Activated CD8-positive, alpha-beta T cell treated with anti-CD3 and anti-CD28 coated beads, Interleukin-2, amount 10 ng/mL, durations not matched to agents 7 days and 5 days (primary cell): ENCODE measurements at regions of chr5 and their contacts with region 1.

Region 1: DNA sequence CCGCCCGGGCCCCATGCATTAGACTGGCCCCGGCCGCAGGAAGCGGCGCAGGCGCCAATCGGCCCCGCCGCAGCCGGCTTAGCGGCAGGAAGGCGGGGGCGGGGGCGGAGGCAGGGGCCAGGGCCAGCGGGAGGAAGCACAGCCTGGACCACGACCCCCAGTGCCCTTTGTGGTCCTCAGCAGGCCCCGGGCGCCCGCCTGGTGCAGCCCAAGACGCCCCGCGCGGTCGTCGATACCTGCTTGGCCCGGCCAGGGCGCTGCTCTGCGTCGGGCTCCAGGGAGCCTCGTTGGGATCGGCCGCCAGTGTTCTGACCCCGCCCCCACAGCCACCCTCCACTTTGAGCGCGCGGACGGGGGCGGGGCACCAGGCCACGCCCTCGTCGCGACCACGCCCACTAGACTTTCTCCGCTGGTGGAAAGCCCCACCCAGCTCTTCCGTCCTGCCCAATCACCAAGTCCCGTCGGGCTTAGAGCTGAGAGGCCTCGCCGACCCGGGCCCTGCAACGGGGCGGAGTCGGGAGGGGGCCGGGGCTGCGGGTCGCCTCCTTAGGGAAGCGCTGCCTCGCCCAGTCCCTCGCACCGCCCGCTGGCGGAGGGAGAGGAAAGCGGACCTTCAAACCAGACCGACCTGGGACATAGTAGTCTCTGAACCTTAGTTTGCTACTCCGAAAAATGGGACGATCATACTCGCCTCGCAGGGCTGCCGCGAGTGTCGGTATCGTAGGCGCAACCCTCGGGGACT is at the start of gene PDLIM7:
- DNase-seq: peak; percentile 97
- ATAC-seq: peak; percentile 91
- H3K4me3 Mint-ChIP-seq: peak within 1 kb of the TSS; percentile 82
- H3K27ac Mint-ChIP-seq: peak within 1 kb of the TSS; percentile 67
- H3K4me1 Mint-ChIP-seq: peaks cover 61% of the 10 kb centered on the region
- H3K27me3 Mint-ChIP-seq: peaks cover 18% of the 10 kb centered on the region
- total RNA-seq, gene PDLIM7: 62.5 to 67.3 TPM

Region 2: DNA sequence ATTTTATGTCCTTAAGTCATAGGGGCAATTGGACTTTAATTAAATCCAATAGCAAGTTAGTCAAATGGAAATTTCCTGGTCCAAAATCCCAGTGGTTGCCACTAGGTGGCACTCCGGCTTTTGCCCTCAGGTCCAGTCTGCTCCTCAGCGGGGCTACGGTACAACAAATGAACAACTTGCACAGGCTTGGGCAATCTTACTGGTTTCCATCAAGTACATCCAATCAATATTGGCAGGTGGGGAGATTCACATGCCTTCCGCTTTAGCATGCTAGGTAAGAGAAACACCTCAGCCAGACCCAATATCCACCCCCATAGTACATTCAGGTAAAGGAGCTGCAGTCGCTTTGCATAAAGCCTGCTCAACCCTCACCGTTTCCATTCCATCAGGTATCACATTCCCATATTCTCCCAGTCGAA is 179.5 kb before region 1 on chr5:
- CTCF ChIA-PET with region 1: interaction called, 20 read pairs
- POLR2A ChIA-PET with region 1: no interaction called
- DNase-seq: peak; percentile 84
- ATAC-seq: peak; percentile 67
- H3K4me3 Mint-ChIP-seq: no peak overlapping the region
- H3K27ac Mint-ChIP-seq: no peak overlapping the region
- H3K4me1 Mint-ChIP-seq: peaks cover 44% of the 10 kb centered on the region
- H3K27me3 Mint-ChIP-seq: no peaks in the 10 kb centered on the region

Region 3: DNA sequence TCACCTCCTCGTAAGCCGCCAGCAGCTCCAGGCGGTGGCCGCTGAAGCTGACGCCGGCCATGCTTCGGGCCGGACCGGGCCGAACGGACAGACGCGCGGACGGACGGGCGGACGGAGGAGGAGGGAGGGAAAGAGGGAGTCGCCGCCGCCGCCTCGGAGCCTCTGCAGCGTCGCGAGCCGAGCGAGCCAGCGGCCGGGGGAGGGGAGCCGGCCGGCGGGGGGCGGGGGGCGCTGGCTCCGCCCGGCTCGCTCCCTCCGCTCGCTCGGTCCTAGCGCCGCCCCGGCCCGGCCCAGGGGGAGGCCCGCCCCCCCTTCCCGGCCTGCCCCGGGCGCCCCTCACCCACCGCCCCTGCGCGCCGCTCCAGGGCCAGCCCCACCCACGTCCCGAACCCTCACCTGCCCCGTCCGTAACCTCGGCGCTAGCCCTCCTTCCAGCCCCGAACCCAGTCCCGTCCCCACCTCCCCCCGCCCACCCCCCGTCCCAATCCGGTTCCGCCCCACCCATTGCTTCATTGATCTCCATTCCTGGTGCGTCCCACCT is 23.9 kb before region 1 on chr5 and contains the start of gene DBN1:
- CTCF ChIA-PET with region 1: interaction called, 28 read pairs
- POLR2A ChIA-PET with region 1: interaction called, 12 read pairs
- DNase-seq: peak; percentile 51
- ATAC-seq: peak; percentile 27
- H3K4me3 Mint-ChIP-seq: peak within 1 kb of the TSS; percentile 80
- H3K27ac Mint-ChIP-seq: peak within 1 kb of the TSS; percentile 83
- H3K4me1 Mint-ChIP-seq: peaks cover 76% of the 10 kb centered on the region
- H3K27me3 Mint-ChIP-seq: peaks cover 4% of the 10 kb centered on the region
- total RNA-seq, gene DBN1: 92.9 to 104 TPM

Region 4: GRCh38 chr5:177509381-177509951 is 12.0 kb after region 1 on chr5 and contains the start of gene DOK3:
- CTCF ChIA-PET with region 1: interaction called, 23 read pairs
- POLR2A ChIA-PET with region 1: interaction called, 4 read pairs
- DNase-seq: no peak
- ATAC-seq: no peak
- H3K4me3 Mint-ChIP-seq: no peak within 1 kb of the TSS
- H3K27ac Mint-ChIP-seq: peak within 1 kb of the TSS; percentile 63
- H3K4me1 Mint-ChIP-seq: peaks cover 12% of the 10 kb centered on the region
- H3K27me3 Mint-ChIP-seq: no peaks in the 10 kb centered on the region
- total RNA-seq, gene DOK3: 7.3 to 7.8 TPM